Stomach (tissue), 19 donors: ENCODE measurements at regions of chr13 and their contacts with region 1.

Region 1: DNA sequence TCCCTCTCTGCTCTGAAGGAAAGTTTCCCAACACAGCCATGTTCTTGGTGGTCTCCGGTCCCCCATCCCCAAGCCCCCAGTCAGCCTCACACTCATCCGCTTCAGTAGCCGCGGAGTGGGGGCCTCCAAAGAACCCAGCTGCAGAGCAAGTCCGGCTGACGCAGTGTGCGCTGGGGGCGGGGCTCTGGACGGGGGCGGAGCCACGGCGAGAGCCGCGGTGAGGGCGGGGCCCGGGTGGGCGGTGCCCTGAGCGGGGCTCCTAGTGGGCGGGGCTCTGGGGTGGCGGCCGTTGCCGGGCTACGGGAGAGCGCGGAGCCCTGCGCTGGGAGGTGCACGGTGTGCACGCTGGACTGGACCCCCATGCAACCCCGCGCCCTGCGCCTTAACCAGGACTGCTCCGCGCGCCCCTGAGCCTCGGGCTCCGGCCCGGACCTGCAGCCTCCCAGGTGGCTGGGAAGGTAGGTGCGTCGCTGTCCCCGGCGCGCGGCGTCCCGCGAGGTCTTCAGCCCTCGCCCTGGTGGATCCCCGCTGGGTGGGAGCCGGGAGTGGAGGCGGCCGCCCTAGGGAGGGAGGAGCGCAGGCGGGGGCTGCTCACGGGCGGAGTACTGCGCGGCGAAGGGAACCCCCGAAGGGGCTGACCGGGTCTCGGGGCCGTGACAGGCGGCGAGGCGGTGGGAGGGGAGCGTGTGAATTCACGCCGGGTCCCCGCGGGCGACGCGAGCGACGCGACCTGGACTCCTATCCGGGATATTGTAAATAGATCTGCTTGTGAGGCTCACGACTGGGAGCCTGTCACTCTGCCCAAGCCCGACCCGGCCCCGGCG is 9.1 kb downstream of the TNFRSF19 start:
- DNase-seq: peak; percentile 93 to 97
- H3K4me3 ChIP-seq: peak overlapping the region; percentile 64 to 92 (median 82)
- H3K27ac ChIP-seq: peak overlapping the region; percentile 87 to 92 (median 89)
- H3K4me1 ChIP-seq: peaks cover 6 to 21% (median 18%) of the 10 kb centered on the region in 4 donors
- H3K27me3 ChIP-seq: peaks cover 0 to 9% (median 5%) of the 10 kb centered on the region in 3 donors
- CTCF ChIP-seq: no peak
- EP300 ChIP-seq: no peak
- POLR2A ChIP-seq: no peak

Region 2: DNA sequence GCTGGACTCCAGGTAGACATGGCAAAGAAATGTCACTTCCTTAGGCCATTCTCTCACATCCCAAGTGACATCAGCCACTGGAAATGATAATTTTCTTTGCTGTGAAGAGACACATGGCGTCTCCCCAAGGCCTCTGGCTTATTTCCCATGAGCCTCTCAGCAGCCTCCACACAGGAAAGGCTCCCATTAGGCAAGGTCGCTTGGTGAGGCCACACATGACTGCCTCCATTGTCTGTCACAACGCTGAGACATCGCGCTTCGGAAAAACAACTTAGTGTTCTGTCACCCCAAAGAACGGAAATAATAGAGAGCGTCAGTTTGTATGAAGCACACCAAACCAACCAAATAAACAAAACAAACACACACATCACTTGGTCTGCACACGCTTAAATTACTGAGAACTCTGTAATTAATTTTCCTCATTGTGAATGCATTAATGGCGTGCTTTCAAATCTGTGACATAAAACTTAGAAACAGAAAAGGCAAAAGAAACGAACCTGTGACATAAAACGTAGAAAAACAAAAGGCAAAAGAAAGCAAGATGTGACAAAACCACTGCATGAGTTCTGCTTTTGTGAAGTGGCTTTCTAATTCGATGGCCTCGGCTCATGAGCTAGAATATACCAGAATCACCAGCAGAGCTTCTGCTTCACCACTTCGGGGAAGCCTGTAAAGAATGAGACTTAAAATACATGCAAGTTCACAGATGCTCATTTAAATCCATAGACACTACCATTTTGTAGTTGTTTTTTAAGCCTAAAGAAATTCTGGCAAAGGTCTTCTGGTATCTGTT is 802.7 kb before region 1 on chr13:
- intact Hi-C with region 1: no loop called
- DNase-seq: no peak
- H3K4me3 ChIP-seq: no peak overlapping the region
- H3K27ac ChIP-seq: no peak overlapping the region
- H3K4me1 ChIP-seq: no peaks in the 10 kb centered on the region
- H3K27me3 ChIP-seq: no peaks in the 10 kb centered on the region
- CTCF ChIP-seq: no peak
- EP300 ChIP-seq: no peak
- POLR2A ChIP-seq: no peak

Region 3: DNA sequence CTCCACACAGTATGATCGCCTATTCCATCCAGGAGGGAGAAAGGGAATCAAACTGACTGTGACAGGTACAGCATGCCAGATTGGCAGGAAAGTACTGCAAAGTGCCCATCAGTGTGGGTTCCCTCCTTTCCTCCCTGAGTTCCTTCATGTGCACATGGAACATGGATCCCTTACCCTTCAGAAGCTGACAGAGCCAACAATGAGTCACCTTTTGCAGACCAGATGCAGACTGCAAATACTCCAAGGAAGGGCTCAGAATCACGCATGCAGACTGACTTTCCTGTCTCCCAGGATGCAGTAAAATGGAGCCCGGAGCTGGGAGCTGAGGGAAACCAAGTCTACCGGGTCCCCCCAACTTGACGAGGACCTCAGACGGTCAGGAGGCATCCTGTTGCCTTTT is 187.5 kb before region 1 on chr13:
- intact Hi-C with region 1: no loop called
- DNase-seq: no peak
- H3K4me3 ChIP-seq: no peak overlapping the region
- H3K27ac ChIP-seq: no peak overlapping the region
- H3K4me1 ChIP-seq: no peaks in the 10 kb centered on the region
- H3K27me3 ChIP-seq: no peaks in the 10 kb centered on the region
- CTCF ChIP-seq: no peak
- EP300 ChIP-seq: no peak
- POLR2A ChIP-seq: no peak

Region 4: DNA sequence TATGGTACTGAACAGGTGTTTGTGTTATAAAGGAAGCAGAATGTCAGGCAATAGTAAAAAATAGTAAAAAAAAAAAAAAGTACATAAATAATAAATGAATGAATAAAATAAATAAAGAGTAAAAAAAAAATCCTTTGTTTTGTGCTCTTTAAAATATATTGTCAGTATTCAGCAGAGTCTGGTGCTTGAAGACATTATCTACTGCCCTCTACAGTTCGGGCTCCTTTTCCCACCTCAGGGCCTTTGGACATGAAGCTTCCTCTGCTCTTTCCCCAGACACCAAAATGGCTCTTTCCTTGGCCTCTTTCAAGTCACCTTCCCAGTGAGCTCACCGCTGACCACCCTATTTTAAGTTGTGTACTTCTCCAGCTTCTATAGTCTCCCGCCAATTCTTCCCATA is 128.4 kb after region 1 on chr13:
- intact Hi-C with region 1: loop called (anchors 5 kb)
- DNase-seq: no peak
- H3K4me3 ChIP-seq: no peak overlapping the region
- H3K27ac ChIP-seq: no peak overlapping the region
- H3K4me1 ChIP-seq: no peaks in the 10 kb centered on the region
- H3K27me3 ChIP-seq: no peaks in the 10 kb centered on the region
- CTCF ChIP-seq: peak in 2 of 7 experiments; percentile 13 to 17
- EP300 ChIP-seq: no peak
- POLR2A ChIP-seq: no peak

Region 5: DNA sequence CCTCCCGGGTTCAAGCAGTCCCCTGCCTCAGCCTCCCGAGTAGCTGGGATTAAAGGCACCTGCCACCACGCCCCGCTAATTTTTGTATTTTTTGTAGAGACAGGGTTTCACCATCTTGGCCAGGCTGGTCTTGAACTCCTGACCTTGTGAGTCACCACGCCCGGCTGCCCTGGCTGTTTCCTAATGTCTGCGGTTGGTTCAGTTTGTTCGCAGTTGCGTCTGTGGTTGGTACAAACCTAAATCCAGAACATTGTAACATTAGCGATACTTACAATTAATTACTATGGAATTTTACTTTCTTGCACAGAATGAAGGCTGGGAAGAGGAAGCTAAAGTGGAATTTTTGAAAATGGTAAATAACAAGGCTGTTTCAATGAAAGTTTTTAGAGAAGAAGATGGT is 1222.8 kb after region 1 on chr13:
- intact Hi-C with region 1: no loop called
- DNase-seq: no peak
- H3K4me3 ChIP-seq: no peak overlapping the region
- H3K27ac ChIP-seq: no peak overlapping the region
- H3K4me1 ChIP-seq: no peaks in the 10 kb centered on the region
- H3K27me3 ChIP-seq: no peaks in the 10 kb centered on the region
- CTCF ChIP-seq: no peak
- EP300 ChIP-seq: no peak
- POLR2A ChIP-seq: no peak